Sigmoid colon (tissue), 7 donors: ENCODE measurements at regions of chr4 and their contacts with region 1.

Region 1: DNA sequence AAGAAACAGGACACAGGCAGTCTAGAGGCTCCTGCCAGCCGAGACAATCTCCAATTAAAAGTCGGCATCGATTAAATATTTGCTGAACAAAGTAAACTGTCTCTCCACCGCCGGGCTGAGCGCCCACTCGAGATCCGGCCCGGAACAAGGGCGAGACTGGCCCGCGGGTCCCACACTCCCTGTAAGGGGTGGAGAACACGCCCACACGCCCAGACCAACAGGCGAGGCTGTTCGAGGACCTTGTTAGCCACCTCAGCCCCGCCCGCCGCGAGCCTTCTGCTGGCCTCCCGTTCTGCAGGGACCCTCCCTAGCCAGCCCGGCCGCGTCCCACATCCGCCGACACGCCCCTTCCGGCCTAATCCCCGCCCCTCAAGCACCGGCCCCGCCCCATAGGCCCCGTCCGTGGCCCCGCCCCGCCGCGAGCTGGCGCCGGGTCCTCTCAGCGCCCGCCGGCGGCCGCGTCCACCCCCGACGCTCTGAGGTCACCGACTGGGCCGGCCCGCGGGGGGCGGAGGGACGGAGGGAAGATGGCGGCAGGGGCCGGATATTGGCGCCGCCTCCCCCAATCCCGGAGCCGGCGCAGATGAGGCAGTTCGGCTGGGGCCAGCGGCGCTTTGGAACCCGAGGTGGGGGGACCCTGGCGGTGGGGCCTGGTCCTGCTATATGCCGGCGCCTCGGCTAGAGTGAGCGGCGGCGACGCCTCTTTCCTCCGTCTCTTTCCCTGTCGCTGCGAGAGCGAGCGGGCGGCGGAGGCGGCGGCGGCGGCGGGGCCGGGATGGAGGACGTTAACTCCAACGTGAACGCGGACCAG is at the start of gene SLAIN2:
- DNase-seq: peak; percentile 99
- H3K4me3 ChIP-seq: peak within 1 kb of the TSS; percentile 80 to 97 (median 91)
- H3K27ac ChIP-seq: peak within 1 kb of the TSS; percentile 92 to 97 (median 96)
- H3K4me1 ChIP-seq: peaks cover 0 to 49% (median 36%) of the 10 kb centered on the region in 4 donors
- H3K27me3 ChIP-seq: no peaks in the 10 kb centered on the region
- CTCF ChIP-seq: peak; percentile 10 to 31 (median 25)
- EP300 ChIP-seq: no peak
- POLR2A ChIP-seq: peak; percentile 63 to 76
- total RNA-seq, gene SLAIN2: 95.9 to 167 (median 112) TPM

Region 2: GRCh38 chr4:47485047-47485692 is 856.0 kb before region 1 on chr4 and contains the start of gene ATP10D:
- intact Hi-C with region 1: loop called (anchors 10 kb)
- DNase-seq: peak; percentile 98
- H3K4me3 ChIP-seq: peak within 1 kb of the TSS; percentile 54 to 69 (median 60)
- H3K27ac ChIP-seq: peak within 1 kb of the TSS; percentile 90 to 94 (median 93)
- H3K4me1 ChIP-seq: peaks cover 0 to 29% (median 12%) of the 10 kb centered on the region in 4 donors
- H3K27me3 ChIP-seq: no peaks in the 10 kb centered on the region
- CTCF ChIP-seq: peak in 2 of 4 experiments; percentile 15 to 18
- EP300 ChIP-seq: peak in 1 of 4 donors; percentile 4
- POLR2A ChIP-seq: peak; percentile 75 to 76
- total RNA-seq, gene ATP10D: 16.8 to 21.0 (median 18.7) TPM

Region 3: GRCh38 chr4:47914220-47914925 is 426.8 kb before region 1 on chr4 and contains the start of gene NFXL1:
- intact Hi-C with region 1: loop called (anchors 2 kb)
- DNase-seq: peak; percentile 99
- H3K4me3 ChIP-seq: peak within 1 kb of the TSS; percentile 75 to 87 (median 82)
- H3K27ac ChIP-seq: peak within 1 kb of the TSS; percentile 75 to 83 (median 80)
- H3K4me1 ChIP-seq: peaks cover 0 to 28% (median 13%) of the 10 kb centered on the region in 4 donors
- H3K27me3 ChIP-seq: no peaks in the 10 kb centered on the region
- CTCF ChIP-seq: no peak
- EP300 ChIP-seq: no peak
- POLR2A ChIP-seq: peak; percentile 56 to 74
- total RNA-seq, gene NFXL1: 8.0 to 20.5 (median 15.8) TPM

Region 4: GRCh38 chr4:48269861-48270522 is 71.2 kb before region 1 on chr4:
- intact Hi-C with region 1: loop called (anchors 2 kb)
- DNase-seq: peak; percentile 95
- H3K4me3 ChIP-seq: peak overlapping the region; percentile 84 to 92 (median 89)
- H3K27ac ChIP-seq: peak overlapping the region; percentile 76 to 81 (median 79)
- H3K4me1 ChIP-seq: peaks cover 0 to 9% (median 0%) of the 10 kb centered on the region in 4 donors
- H3K27me3 ChIP-seq: no peaks in the 10 kb centered on the region
- CTCF ChIP-seq: peak in 3 of 4 experiments; percentile 12 to 22 (median 17)
- EP300 ChIP-seq: no peak
- POLR2A ChIP-seq: peak in 1 of 2 donors; percentile 5

Region 5: DNA sequence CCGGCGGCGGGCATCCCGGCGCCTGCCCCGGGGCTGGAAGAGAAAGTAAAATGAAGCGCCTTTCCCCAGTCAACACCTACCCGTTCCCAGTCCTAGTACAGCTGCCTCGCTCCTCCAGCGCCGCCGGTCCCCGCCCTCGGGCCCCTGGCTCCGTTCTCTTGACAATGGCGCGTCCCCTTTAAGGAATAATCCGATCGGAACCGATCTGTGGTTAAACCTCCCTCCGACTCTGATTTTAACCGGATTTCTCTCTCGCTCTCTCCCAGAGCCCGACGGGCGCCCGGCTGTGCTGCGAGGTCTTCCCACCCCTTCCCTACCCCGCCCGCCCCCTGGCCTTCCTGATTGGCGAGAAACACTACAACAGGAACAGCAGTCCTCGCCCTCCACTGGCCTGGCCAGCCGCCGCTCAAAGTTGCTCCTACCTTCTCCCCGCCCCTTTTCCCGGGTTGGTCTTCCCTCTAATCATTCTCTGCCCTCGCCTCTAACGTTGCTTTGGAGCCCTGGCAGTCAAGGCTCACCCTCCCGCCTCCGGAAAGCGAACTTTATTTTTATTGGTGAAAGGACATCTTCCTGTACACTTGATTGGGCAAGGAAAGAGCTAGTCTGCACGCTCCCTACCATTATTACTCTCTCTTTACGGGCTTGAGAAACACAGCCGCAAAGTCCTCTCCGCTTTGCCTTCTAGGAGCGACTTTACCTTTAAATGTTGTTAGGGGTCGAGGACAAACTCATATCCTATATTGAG is 439.0 kb after region 1 on chr4 and contains the start of gene FRYL:
- intact Hi-C with region 1: loop called (anchors 2 kb)
- DNase-seq: peak; percentile 100
- H3K4me3 ChIP-seq: peak within 1 kb of the TSS; percentile 74 to 96 (median 95)
- H3K27ac ChIP-seq: peak within 1 kb of the TSS; percentile 94 to 99 (median 98)
- H3K4me1 ChIP-seq: peaks cover 0 to 39% (median 32%) of the 10 kb centered on the region in 4 donors
- H3K27me3 ChIP-seq: no peaks in the 10 kb centered on the region
- CTCF ChIP-seq: no peak
- EP300 ChIP-seq: no peak
- POLR2A ChIP-seq: peak; percentile 60 to 64
- total RNA-seq, gene FRYL: 44.9 to 72.4 (median 63.2) TPM